ENCODE measurements at regions of chr6 and their contacts with region 1.

Region 1: GRCh38 chr6:30678964-30679726 is 6.3 kb upstream of the DHX16 start:
- DNase-seq: peak; percentile 83
- ATAC-seq: peak; percentile 93
- H3K4me3 ChIP-seq: peak overlapping the region; percentile 43 to 66 (median 44)
- H3K27ac ChIP-seq: peak overlapping the region; percentile 32
- H3K4me1 ChIP-seq: peaks cover 41% of the 10 kb centered on the region
- H3K27me3 ChIP-seq: no peaks in the 10 kb centered on the region
- CTCF ChIP-seq: peak; percentile 100
- EP300 ChIP-seq: 0 out of 4 replicates have a peak, but pooled peaks of 1 of the 2 experiments have one; percentile 35
- POLR2A ChIP-seq: no peak
- RAD21 ChIP-seq: peak; percentile 99

Region 2: GRCh38 chr6:30635834-30636233 is 43.3 kb before region 1 on chr6:
- CTCF ChIA-PET with region 1: no interaction called
- POLR2A ChIA-PET with region 1: no interaction called
- in situ Hi-C with region 1: no loop called
- intact Hi-C with region 1: no loop called
- DNase-seq: no peak
- ATAC-seq: no peak
- H3K4me3 ChIP-seq: no peak overlapping the region
- H3K27ac ChIP-seq: no peak overlapping the region
- H3K4me1 ChIP-seq: peaks cover 11% of the 10 kb centered on the region
- H3K27me3 ChIP-seq: no peaks in the 10 kb centered on the region
- CTCF ChIP-seq: no peak
- EP300 ChIP-seq: no peak
- POLR2A ChIP-seq: no peak
- RAD21 ChIP-seq: no peak

Region 3: DNA sequence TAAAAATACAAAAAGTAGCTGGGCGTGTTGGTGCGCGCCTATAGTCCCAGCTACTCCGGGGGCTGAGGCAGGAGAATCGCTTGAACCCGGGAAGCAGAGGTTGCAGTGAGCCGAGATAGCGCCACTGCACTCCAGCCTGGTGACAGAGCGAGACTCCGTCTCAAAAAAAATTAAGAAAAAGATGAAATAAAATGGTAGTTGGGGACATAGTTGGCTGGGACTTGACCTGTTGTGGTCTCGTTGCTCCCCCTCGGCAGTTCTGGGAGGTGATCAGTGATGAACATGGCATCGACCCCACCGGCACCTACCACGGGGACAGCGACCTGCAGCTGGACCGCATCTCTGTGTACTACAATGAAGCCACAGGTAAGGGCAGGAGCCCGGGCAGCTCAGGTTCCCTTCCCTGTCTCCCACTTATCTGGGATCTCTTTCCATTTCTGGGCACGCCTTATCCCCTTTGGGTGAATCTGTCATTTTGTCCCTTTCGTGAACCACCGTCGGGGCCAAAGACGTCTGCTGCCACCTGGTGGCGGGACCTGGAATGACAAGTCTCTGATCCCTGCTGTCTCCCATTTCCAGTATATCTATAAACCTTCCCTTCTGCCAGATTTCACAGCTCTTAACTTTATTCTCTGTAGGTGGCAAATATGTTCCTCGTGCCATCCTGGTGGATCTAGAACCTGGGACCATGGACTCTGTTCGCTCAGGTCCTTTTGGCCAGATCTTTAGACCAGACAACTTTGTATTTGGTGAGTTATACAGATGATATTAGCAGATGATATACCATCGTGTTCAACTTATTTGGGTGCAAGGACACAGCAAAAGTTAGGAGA is 43.4 kb after region 1 on chr6:
- CTCF ChIA-PET with region 1: interaction called, 130 read pairs
- POLR2A ChIA-PET with region 1: interaction called, 92 read pairs
- in situ Hi-C with region 1: loop called (anchors 5 kb)
- intact Hi-C with region 1: loop called (anchors 1 kb)
- DNase-seq: peak; percentile 82
- ATAC-seq: peak; percentile 0; the same call in 1 of the 3 replicates
- H3K4me3 ChIP-seq: peak overlapping the region; percentile 89 to 94 (median 90); a peak in 5 of 6 replicates
- H3K27ac ChIP-seq: peak overlapping the region; percentile 96
- H3K4me1 ChIP-seq: peaks cover 58% of the 10 kb centered on the region
- H3K27me3 ChIP-seq: no peaks in the 10 kb centered on the region; a peak in 1 of 5 replicates
- CTCF ChIP-seq: peak; percentile 96
- EP300 ChIP-seq: no peak
- POLR2A ChIP-seq: peak; percentile 50 to 63; a peak in 2 of 4 replicates
- RAD21 ChIP-seq: peak; percentile 94